Head of caudate nucleus (tissue), 42 donors: ENCODE measurements at regions of chr2 and their contacts with region 1.

Region 1: DNA sequence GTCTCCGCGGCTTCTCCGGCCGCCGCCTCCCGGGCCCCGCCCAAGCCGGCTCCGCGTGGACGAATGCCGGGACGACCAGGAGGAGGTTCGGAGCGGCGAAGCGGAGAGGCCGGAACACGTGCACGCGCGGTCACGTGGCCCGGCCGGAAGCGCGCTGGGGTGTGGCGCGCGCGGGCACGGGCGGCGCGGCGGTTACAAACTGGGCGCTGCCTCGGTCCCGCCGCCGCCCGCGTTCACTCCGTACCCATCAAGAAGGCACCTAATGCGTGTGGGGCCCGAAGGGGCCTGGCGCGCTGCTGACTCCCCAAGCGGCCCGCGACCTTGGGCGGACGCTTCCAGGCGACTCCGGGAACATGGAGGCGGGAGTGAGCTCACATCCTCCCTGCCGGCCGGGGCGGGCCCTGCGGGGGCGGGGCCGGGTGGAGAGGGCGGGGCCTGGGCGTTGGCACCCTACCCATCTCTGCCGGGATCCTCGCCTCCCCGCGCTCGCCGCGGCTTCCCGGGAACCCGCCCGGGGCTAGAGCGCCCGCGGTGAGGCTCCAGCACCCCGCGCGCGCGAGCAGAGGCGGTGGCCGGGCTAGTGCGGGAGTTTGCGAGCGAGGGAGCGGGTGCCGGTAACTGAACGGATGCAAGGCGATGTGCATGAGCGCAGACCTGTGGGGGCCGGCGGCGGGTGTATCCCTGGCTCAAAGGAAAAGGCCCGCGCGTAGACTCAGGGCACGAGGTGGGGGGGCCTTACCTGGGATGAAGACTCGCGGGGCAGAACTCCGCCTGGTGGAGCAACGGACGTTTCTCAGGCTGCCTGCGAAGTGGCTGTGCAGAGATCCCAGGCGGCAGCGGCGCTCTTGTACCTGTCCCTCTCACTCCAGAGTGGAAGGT is at the start of gene TMEM185B:
- DNase-seq: peak; percentile 73 to 97 (median 92)

Region 2: GRCh38 chr2:120134263-120134662 is 89.0 kb before region 1 on chr2:
- intact Hi-C with region 1: no loop called
- DNase-seq: no peak

Region 3: DNA sequence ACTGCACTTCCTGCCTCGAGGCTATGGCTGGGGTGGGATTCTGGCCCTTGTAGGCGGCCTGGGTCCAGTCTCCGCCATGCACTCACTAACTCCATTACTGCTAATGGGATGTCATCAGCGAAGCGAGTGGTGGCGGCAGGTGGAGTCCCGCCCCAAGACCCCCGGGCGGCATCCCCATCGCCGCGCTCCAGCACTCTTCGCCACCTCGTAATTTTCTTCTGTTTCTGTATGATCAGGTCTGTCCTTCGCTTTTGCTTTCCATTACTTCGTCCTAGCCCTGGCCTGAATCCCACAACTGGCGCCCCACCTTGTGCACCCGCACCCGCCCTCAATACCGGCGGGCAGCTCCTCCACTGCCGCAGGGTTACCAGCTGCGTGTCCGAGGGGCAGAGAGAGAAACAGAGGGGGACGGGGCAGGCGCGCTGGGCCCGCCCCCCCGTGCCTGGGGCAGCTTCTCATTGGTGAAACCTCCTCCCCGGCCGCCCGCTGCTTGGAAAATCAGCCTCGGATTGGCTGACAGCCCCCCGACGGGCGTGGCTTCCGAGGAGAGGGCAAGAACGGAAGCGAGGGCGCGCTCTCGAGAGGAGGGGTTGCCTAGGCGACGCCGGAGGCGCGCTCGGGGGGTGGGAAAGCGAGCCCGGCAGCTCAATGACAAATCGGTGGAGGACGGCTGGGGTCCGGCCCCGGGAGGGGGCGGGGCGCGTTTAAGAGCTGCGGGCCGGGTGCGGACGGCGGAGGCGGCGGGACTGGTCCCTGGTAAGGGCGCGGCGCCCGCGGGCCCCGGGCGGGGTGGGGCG is 29.1 kb after region 1 on chr2 and contains the start of gene RALB:
- intact Hi-C with region 1: loop called (anchors 1 kb)
- DNase-seq: peak; percentile 98 to 100 (median 100)

Region 4: DNA sequence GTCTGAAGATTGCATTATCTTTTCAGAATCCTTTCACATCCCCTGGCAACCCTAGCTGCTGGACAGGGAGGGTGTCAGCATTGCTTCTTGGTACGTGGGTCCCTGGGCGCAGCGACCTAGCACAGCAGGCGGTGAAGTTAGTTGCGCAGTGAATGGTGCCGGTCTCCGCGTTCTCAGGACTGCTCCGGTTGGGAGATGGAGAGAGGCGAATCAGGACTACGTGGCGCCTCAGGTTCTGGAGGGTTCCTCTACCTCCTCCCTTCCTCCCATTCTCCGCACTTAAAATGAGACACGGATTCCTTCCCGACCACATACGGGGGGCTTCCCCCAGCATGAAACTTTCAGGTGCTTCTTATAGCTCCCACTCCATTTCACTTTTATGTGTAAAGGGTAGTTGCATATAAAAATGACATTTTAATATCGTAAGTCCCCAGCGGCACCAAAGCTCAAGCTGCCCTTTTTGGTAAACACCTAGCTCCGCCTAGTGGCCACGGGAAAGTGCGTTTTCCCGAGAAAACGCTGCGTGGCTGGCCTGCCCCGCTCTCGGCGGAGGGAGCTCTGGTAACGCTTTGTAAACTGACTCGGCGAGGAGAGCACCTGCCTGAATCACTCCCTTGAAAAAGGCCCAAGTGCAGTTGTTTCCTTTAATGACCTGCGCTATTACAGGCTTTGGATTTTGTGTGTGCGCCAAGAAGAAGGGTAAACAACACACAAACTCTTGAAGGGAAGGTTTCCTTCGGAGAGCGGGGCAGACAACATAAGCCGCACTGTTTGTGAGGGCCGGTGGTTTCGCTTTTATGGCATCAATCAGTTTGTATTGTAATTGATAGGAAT is 89.8 kb after region 1 on chr2:
- intact Hi-C with region 1: loop called (anchors 10 kb)
- DNase-seq: peak; percentile 65 to 93 (median 86)